HEK293 (cell line): ENCODE measurements at regions of chr9 and their contacts with region 1.

Region 1: DNA sequence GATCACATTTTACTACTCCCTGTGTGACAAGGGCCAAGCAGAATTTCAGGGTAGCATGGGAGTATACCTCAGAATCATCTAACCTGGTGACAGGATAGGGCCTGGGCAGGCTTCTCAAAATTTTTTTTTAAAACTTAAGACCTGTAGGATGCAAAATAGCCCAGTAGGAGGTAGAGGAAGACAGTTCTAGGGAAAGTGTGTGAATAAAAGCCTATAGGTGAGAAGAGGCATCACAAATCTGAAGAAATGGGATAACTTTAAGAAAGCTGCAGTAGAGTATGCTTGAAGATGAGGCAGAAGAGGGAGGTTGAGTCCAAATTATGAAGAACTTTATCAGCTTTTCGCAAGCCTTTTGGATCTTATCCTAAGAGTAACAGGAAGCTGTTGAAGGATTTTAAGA is 32.3 kb downstream of the CNTRL start:
- H3K4me3 ChIP-seq: no peak overlapping the region
- H3K27ac ChIP-seq: no peak overlapping the region
- H3K4me1 ChIP-seq: no peaks in the 10 kb centered on the region
- CTCF ChIP-seq: no peak

Region 2: GRCh38 chr9:120755827-120756434 is 351.1 kb before region 1 on chr9:
- CTCF ChIA-PET with region 1: no interaction called
- POLR2A ChIA-PET with region 1: no interaction called
- H3K4me3 ChIP-seq: no peak overlapping the region
- H3K27ac ChIP-seq: no peak overlapping the region
- H3K4me1 ChIP-seq: no peaks in the 10 kb centered on the region
- CTCF ChIP-seq: peak; percentile 68

Region 3: GRCh38 chr9:121085661-121086060 is 21.4 kb before region 1 on chr9:
- CTCF ChIA-PET with region 1: no interaction called
- POLR2A ChIA-PET with region 1: no interaction called
- H3K4me3 ChIP-seq: no peak overlapping the region
- H3K27ac ChIP-seq: no peak overlapping the region
- H3K4me1 ChIP-seq: no peaks in the 10 kb centered on the region
- CTCF ChIP-seq: no peak

Region 4: GRCh38 chr9:121121582-121122087 is 14.6 kb after region 1 on chr9:
- CTCF ChIA-PET with region 1: interaction called, 14 read pairs
- POLR2A ChIA-PET with region 1: interaction called, 3 read pairs
- H3K4me3 ChIP-seq: peak overlapping the region; percentile 23
- H3K27ac ChIP-seq: no peak overlapping the region
- H3K4me1 ChIP-seq: no peaks in the 10 kb centered on the region
- CTCF ChIP-seq: no peak